ENCODE measurements at regions of chr10 and their contacts with region 1.

Region 1: DNA sequence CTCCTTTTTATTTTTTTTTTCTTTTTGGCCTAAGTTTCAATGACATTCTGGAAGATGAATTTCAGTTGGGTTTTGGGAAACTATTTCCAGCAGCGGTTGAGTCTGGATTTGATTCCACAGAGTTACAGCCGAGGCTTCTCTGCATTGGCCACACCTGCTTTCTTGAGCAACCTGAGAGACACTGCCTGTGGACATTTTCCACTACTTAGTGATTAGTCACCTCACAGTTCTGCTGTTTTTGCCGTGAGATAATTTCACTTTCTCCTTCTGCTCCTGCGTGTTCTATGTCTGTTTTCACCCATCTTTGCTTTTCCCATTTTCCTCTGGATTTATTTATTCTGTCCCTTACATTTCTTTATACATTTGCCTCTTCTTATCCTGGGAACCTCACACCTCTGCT is 243.0 kb downstream of the BICC1 start:
- DNase-seq: peak in 1 of 5 donors; percentile 25
- ATAC-seq: peak in 3 of 4 donors; percentile 64 to 67 (median 64)
- H3K4me3 ChIP-seq: peak overlapping the region in 3 of 12 donors; percentile 2 to 42 (median 31)
- H3K27ac ChIP-seq: peak overlapping the region in 7 of 12 donors; percentile 33 to 63 (median 55)
- H3K4me1 ChIP-seq: peaks cover 0 to 20% (median 2%) of the 10 kb centered on the region in 12 donors
- H3K27me3 ChIP-seq: no peaks in the 10 kb centered on the region
- CTCF ChIP-seq: no peak
- POLR2A ChIP-seq: no peak

Region 2: DNA sequence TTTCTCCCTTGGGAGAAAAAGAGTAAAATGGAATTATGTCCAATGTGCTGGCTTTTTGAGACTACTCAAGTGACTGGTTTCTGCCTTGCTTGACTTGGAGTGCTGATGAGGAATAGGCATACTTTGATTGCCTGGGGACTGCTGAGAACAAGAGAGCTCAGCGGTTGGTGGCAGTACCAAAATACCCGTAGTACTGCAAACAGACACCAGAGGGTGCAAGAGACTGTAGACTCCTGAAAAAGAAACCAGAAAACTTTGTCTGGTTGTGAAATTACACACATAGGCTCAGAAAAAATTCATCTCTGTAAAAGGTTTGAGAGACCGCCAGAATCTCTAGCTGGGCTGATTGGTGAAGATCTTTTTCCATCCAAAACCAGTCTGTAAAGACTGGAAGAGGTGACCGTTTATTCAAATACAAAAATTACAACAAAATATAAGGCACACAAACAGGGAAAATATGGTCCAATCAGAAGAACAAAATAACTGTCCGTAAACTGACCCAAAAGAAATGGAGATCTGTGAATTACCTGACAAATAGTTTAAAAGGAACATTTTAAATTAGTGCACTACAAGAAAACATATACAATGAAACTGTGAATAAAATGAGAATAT is 224.5 kb before region 1 on chr10:
- intact Hi-C with region 1: no loop called
- DNase-seq: peak in 3 of 5 donors; percentile 21 to 37 (median 26)
- ATAC-seq: no peak
- H3K4me3 ChIP-seq: no peak overlapping the region
- H3K27ac ChIP-seq: no peak overlapping the region
- H3K4me1 ChIP-seq: no peaks in the 10 kb centered on the region
- H3K27me3 ChIP-seq: no peaks in the 10 kb centered on the region
- CTCF ChIP-seq: peak; percentile 44 to 73 (median 59)
- POLR2A ChIP-seq: no peak

Region 3: GRCh38 chr10:58706836-58707235 is 48.8 kb before region 1 on chr10:
- intact Hi-C with region 1: loop called in 1 of 10 experiments (anchors 2 kb)
- DNase-seq: no peak
- ATAC-seq: no peak
- H3K4me3 ChIP-seq: no peak overlapping the region
- H3K27ac ChIP-seq: no peak overlapping the region
- H3K4me1 ChIP-seq: peaks cover 0 to 22% (median 0%) of the 10 kb centered on the region in 12 donors
- H3K27me3 ChIP-seq: no peaks in the 10 kb centered on the region
- CTCF ChIP-seq: no peak
- POLR2A ChIP-seq: no peak